ENCODE measurements at regions of chr15 and their contacts with region 1.

Region 1: DNA sequence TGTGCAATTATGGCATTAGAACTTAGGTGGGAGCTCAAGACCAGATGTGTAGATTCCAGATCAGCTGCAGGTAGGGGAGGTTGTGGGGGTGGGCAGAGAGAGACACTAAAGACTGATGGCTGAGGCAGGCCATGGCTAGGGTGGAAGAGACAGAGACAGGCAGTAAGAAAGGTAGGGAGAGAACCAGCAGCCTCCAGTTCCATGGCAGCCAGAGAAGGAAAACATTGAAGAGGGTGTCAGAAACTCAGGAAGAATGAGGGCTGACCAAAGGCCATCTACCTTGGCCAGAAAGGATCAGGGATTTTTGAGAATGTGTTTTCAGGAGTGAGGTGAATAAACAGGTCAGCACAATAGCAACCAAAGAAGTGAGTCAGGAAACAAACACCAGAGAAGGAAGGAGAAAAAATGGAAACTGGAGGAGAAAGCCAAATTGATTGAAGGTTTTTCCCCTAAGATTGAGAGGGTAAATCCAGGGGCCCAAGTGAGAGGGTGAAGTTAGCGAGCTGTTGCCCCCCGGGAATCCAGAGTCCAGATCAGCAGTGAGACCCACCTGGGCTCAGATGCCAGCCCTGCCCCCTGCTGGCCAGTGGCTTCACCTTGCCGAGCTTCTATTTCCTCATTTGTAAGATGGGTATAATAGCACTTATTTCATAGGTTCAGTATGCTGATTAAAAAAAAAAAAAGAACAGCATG is 41.0 kb downstream of the ABHD2 start:
- DNase-seq: peak; percentile 16
- H3K4me3 Mint-ChIP-seq: no peak overlapping the region
- H3K27ac Mint-ChIP-seq: no peak overlapping the region
- H3K4me1 Mint-ChIP-seq: peaks cover 19% of the 10 kb centered on the region
- H3K27me3 Mint-ChIP-seq: no peaks in the 10 kb centered on the region

Region 2: DNA sequence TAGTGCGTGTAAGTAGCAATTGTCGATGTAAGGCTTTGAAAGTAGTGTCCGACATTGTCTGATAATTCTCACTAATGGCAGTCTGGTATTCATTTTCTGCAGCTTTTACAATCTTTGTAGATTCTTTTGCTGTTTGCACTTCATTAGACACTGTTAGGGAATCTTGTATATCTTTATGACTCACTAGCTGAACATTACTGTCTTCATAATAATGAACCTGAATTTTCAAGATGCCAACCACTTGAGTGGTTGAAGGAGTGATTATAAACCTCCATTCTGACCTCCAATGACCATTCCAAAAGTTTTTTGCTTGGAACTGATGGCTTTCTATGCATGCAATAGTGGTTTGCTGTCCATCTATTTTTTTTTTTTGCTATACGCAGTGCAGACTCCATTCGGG is 139.7 kb before region 1 on chr15:
- intact Hi-C with region 1: no loop called
- DNase-seq: no peak
- H3K4me3 Mint-ChIP-seq: no peak overlapping the region
- H3K27ac Mint-ChIP-seq: no peak overlapping the region
- H3K4me1 Mint-ChIP-seq: no peaks in the 10 kb centered on the region
- H3K27me3 Mint-ChIP-seq: peaks cover 11% of the 10 kb centered on the region

Region 3: GRCh38 chr15:89057504-89058133 is 71.7 kb before region 1 on chr15:
- intact Hi-C with region 1: loop called (anchors 1 kb)
- DNase-seq: peak; percentile 68
- H3K4me3 Mint-ChIP-seq: no peak overlapping the region
- H3K27ac Mint-ChIP-seq: no peak overlapping the region
- H3K4me1 Mint-ChIP-seq: peaks cover 11% of the 10 kb centered on the region
- H3K27me3 Mint-ChIP-seq: peaks cover 12% of the 10 kb centered on the region

Region 4: DNA sequence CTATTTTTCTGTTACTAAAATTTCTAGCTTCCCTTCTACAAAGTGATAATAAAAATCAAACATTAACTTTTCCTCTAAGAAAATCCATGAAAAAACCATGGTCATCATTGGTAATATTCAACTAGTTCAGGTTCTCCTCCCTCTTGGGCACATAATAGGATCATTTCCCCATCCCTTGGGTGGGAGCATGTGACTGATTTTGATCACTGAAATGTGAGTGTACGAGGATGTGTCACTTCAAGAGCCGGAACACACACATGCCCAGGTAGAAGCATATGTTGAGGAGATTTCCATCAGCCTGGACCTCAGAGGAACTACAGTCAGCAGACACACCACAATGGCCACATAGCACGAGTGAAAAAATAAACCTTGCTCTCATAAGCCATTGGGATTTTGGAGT is 728.4 kb after region 1 on chr15:
- intact Hi-C with region 1: no loop called
- DNase-seq: no peak
- H3K4me3 Mint-ChIP-seq: no peak overlapping the region
- H3K27ac Mint-ChIP-seq: no peak overlapping the region
- H3K4me1 Mint-ChIP-seq: peaks cover 11% of the 10 kb centered on the region
- H3K27me3 Mint-ChIP-seq: no peaks in the 10 kb centered on the region